ENCODE measurements at regions of chr2 and their contacts with region 1.

Region 1: DNA sequence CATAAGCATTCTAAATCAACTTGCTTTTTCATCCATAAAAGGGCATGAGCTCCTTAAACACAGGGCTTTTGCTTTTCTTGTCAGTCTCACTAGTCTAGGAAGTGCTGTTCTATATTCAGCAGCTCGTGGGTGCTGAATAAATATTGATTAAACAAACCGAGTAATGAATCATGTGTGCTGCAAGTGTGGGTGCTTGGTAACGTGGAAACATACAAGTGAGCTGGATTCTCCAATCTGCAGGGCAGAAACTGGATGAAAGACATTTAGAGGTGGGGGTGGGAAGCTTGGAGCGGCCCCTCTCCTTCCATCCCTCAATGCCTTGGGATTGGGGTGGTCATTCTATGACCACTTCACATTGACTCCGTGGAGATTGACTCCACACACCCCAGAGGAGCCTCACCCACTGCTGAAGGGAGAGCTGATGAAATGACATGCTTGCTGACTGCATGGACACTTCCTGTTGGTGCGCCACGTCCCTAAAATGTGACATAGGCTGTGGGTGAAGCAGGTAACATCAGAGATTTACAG is 114.6 kb downstream of the DOCK10 start:
- DNase-seq: peak; percentile 29 to 89 (median 55)
- ATAC-seq: peak; percentile 81
- H3K4me3 ChIP-seq: no peak overlapping the region
- H3K4me3 Mint-ChIP-seq: peak overlapping the region; percentile 70
- H3K27ac ChIP-seq: peak overlapping the region; percentile 71 to 74
- H3K27ac Mint-ChIP-seq: peak overlapping the region; percentile 97
- H3K4me1 ChIP-seq: peaks cover 69% of the 10 kb centered on the region
- H3K4me1 Mint-ChIP-seq: peaks cover 99% of the 10 kb centered on the region
- H3K27me3 ChIP-seq: no peaks in the 10 kb centered on the region
- H3K27me3 Mint-ChIP-seq: no peaks in the 10 kb centered on the region
- CTCF ChIP-seq: no peak

Region 2: DNA sequence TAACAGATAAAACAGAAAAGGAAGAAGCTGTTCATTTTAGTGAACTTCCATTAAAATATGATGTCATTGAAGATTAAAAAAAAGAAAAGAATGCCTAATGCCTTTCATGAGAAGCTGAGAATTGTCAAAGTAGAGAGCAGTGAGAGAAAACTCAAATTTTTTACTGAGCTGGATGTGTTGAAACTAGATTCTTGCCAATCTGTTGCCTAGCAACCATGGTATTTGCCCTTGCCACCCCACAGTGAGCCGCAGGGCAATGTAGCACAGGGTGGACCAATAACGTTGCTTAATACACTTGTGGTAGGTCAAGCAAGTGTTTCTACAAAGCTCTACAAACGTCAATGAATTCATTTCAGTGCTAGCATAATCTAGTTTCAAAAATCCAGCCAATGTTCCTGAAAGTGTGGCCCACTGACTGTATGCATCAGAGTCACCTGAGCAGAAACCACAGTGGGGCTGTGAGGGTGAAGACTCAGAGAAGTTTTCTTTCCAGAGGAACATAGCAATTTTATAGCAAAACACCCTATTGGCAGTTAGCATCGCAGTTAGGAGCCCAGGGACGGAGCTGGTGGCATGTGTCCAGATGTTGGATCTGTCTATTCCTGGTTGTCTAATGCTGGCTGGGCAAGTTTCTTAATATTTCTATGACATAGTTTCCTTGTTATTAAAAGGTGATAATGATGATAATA is 17.7 kb before region 1 on chr2:
- CTCF ChIA-PET with region 1: interaction called, 6 read pairs
- POLR2A ChIA-PET with region 1: interaction called, 3 read pairs
- intact Hi-C with region 1: loop called in 1 of 2 experiments (anchors 2 kb)
- DNase-seq: peak in 5 of 14 experiments; percentile 25 to 66 (median 35)
- ATAC-seq: peak; percentile 78
- H3K4me3 ChIP-seq: no peak overlapping the region
- H3K4me3 Mint-ChIP-seq: no peak overlapping the region
- H3K27ac ChIP-seq: no peak overlapping the region
- H3K27ac Mint-ChIP-seq: peak overlapping the region; percentile 69
- H3K4me1 ChIP-seq: peaks cover 6% of the 10 kb centered on the region
- H3K4me1 Mint-ChIP-seq: peaks cover 59% of the 10 kb centered on the region
- H3K27me3 ChIP-seq: no peaks in the 10 kb centered on the region
- H3K27me3 Mint-ChIP-seq: no peaks in the 10 kb centered on the region
- CTCF ChIP-seq: no peak

Region 3: GRCh38 chr2:224946895-224947294 is 19.2 kb after region 1 on chr2:
- CTCF ChIA-PET with region 1: interaction called, 14 read pairs
- POLR2A ChIA-PET with region 1: interaction called, 86 read pairs
- intact Hi-C with region 1: loop called (anchors 1 to 2 kb)
- DNase-seq: peak in 3 of 14 experiments; percentile 77 to 86 (median 80)
- ATAC-seq: peak; percentile 84
- H3K4me3 ChIP-seq: peak overlapping the region; percentile 52
- H3K4me3 Mint-ChIP-seq: peak overlapping the region; percentile 90
- H3K27ac ChIP-seq: peak overlapping the region; percentile 73 to 86
- H3K27ac Mint-ChIP-seq: peak overlapping the region; percentile 89
- H3K4me1 ChIP-seq: peaks cover 38% of the 10 kb centered on the region
- H3K4me1 Mint-ChIP-seq: peaks cover 81% of the 10 kb centered on the region
- H3K27me3 ChIP-seq: no peaks in the 10 kb centered on the region
- H3K27me3 Mint-ChIP-seq: no peaks in the 10 kb centered on the region
- CTCF ChIP-seq: no peak

Region 4: GRCh38 chr2:224982910-224983711 is 55.4 kb after region 1 on chr2:
- CTCF ChIA-PET with region 1: interaction called, 3 read pairs
- POLR2A ChIA-PET with region 1: interaction called, 7 read pairs
- intact Hi-C with region 1: loop called in 1 of 2 experiments (anchors 5 kb)
- DNase-seq: peak in 13 of 14 experiments; percentile 12 to 70 (median 45)
- ATAC-seq: peak; percentile 66
- H3K4me3 ChIP-seq: peak overlapping the region; percentile 3
- H3K4me3 Mint-ChIP-seq: peak overlapping the region; percentile 67
- H3K27ac ChIP-seq: peak overlapping the region; percentile 13 to 60
- H3K27ac Mint-ChIP-seq: peak overlapping the region; percentile 84
- H3K4me1 ChIP-seq: peaks cover 51% of the 10 kb centered on the region
- H3K4me1 Mint-ChIP-seq: peaks cover 79% of the 10 kb centered on the region
- H3K27me3 ChIP-seq: no peaks in the 10 kb centered on the region
- H3K27me3 Mint-ChIP-seq: no peaks in the 10 kb centered on the region
- CTCF ChIP-seq: no peak

Region 5: GRCh38 chr2:225660262-225661131 is 732.8 kb after region 1 on chr2:
- CTCF ChIA-PET with region 1: no interaction called
- POLR2A ChIA-PET with region 1: no interaction called
- intact Hi-C with region 1: loop called in 1 of 2 experiments (anchors 1 kb)
- DNase-seq: peak; percentile 59 to 81 (median 68)
- ATAC-seq: peak; percentile 71
- H3K4me3 ChIP-seq: no peak overlapping the region
- H3K4me3 Mint-ChIP-seq: no peak overlapping the region
- H3K27ac ChIP-seq: no peak overlapping the region
- H3K27ac Mint-ChIP-seq: no peak overlapping the region
- H3K4me1 ChIP-seq: no peaks in the 10 kb centered on the region
- H3K4me1 Mint-ChIP-seq: no peaks in the 10 kb centered on the region
- H3K27me3 ChIP-seq: no peaks in the 10 kb centered on the region
- H3K27me3 Mint-ChIP-seq: peaks cover 41% of the 10 kb centered on the region
- CTCF ChIP-seq: peak; percentile 94